ENCODE measurements at regions of chr6 and their contacts with region 1.

Region 1: GRCh38 chr6:107957909-107958688 is at the start of gene SEC63:
- H3K4me3 Mint-ChIP-seq: peak within 1 kb of the TSS; percentile 93
- H3K27ac Mint-ChIP-seq: peak within 1 kb of the TSS; percentile 95
- H3K4me1 Mint-ChIP-seq: peaks cover 30% of the 10 kb centered on the region
- H3K27me3 Mint-ChIP-seq: peaks cover 10% of the 10 kb centered on the region

Region 2: DNA sequence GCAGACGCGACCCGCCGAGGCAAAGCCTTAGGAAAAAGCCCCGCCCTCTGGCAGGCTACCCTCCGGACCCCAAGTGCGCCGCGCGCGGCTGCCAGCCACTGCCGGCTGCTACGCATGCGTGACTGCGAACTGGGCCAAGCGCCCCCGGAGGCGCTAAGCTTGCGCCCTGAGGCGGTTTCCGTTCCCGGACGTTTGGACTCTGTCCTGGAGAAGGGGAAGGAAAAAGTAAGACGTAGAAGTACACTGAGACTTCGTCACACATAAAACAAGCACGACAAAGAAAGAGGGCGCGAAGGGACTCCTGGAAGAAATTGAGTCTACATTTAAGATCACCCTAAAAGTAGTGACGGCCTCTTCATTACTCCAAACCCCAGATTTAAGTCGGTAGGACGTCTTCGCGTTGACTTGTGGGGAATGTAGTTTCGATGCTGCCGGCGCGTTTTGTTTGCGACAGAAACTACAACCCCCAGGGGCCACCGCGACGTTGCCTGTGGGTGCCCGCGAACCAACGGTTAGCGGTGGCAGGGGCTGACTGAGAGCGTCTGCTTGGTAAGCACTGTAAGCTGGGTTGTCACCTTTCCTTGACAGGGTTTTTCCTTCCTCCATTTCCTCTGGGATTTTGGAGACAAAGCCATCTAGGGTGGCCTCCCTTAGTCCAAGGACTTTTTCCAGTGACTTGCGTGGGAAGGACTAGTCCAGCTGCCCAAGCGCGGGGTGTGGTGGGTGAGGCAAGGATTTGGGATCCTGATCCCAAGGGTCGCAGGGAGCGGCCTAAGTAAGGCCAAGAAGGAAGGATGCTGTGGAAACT is 1137.1 kb after region 1 on chr6 and contains the start of gene CEP57L1:
- intact Hi-C with region 1: loop called (anchors 5 kb)
- H3K4me3 Mint-ChIP-seq: peak within 1 kb of the TSS; percentile 88
- H3K27ac Mint-ChIP-seq: peak within 1 kb of the TSS; percentile 100
- H3K4me1 Mint-ChIP-seq: peaks cover 26% of the 10 kb centered on the region
- H3K27me3 Mint-ChIP-seq: no peaks in the 10 kb centered on the region

Measured in dendritic cell treated with granulocyte-macrophage colony-stimulating factor and Interleukin-4, amounts not matched to agents 40 ng/mL and 50 ng/mL, for 4 days (primary cell).